ENCODE measurements at regions of chr7 and their contacts with region 1.

Region 1: DNA sequence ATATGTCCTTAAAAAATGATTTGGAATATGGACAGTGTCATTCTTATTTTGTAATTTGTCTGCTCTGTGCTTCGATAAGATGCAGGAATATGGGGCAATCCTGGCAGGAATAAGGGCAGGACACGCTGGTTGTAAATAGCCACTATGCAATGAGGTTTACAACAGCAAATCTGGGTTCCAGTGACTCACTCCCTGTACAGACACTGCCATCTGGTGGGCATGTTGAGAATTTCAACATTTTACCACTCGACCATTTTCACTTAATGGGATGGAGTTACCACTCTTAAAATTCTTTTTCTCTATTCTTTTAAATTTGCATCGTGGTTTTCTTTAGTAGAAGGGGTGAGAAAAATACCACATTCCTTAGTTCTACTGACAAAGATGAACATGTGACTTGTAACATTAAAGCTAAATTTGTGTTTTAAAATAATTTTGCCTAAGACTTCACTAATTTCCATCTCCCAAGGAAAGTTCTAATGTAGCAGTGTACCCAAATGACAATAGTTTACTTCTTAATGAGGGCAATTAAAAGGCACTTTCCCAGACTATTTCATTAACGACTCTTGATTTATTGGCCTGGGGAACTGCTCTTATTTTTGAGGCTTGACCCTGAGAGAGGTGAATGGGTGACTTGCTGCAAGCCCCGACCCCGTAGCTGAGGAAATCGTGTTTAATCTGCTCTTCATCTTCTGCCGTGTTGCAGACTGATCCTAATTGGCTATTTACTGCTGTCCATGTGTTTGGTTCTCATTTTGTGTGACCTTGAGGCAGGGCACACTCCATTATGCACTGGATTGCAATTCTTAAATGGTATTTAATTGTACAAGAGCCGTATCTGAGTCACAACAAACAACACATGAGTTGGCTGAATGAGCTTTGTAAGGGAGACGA is 173.6 kb upstream of the IMMP2L start:
- DNase-seq: peak; percentile 62
- H3K4me3 ChIP-seq: no peak overlapping the region
- H3K27ac ChIP-seq: no peak overlapping the region
- H3K4me1 ChIP-seq: no peaks in the 10 kb centered on the region
- CTCF ChIP-seq: peak; percentile 92

Region 2: GRCh38 chr7:109844362-109844761 is 1891.5 kb before region 1 on chr7:
- CTCF ChIA-PET with region 1: no interaction called
- POLR2A ChIA-PET with region 1: no interaction called
- intact Hi-C with region 1: loop called (anchors 5 kb)
- DNase-seq: no peak
- H3K4me3 ChIP-seq: no peak overlapping the region
- H3K27ac ChIP-seq: no peak overlapping the region
- H3K4me1 ChIP-seq: no peaks in the 10 kb centered on the region
- CTCF ChIP-seq: peak; percentile 69

Region 3: DNA sequence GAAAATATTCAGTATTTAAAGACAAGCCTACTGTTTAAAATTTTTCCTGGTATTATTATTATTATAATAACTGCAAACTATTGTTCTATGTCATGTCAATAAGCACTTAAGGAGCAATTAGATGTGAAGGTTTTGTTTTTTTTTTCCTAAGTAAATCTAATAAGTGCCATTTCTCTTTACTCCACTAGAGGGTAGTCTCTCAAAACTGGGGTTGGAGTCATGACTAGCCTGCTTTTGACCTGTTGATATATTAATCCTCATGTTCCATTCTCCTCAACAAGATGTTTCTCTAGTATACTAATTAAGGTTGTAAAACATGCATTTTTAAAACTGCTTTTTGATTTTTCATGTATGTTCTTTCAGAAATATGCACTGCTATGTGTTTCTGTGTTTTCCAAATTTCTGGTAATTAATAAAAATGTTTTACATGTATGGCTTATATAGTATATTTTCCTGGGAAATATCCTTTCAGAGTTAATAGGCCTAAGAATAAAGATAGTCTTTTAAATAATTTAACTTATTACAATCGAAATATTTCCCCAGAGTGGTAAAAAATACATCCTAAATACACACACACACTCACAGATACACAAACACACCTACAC is 646.0 kb before region 1 on chr7:
- CTCF ChIA-PET with region 1: no interaction called
- POLR2A ChIA-PET with region 1: no interaction called
- intact Hi-C with region 1: loop called (anchors 2 kb)
- DNase-seq: peak; percentile 44
- H3K4me3 ChIP-seq: no peak overlapping the region
- H3K27ac ChIP-seq: no peak overlapping the region
- H3K4me1 ChIP-seq: no peaks in the 10 kb centered on the region
- CTCF ChIP-seq: peak; percentile 87

Region 4: GRCh38 chr7:111312964-111313363 is 422.9 kb before region 1 on chr7:
- CTCF ChIA-PET with region 1: no interaction called
- POLR2A ChIA-PET with region 1: no interaction called
- intact Hi-C with region 1: loop called (anchors 10 kb)
- DNase-seq: peak; percentile 1
- H3K4me3 ChIP-seq: no peak overlapping the region
- H3K27ac ChIP-seq: no peak overlapping the region
- H3K4me1 ChIP-seq: no peaks in the 10 kb centered on the region
- CTCF ChIP-seq: 0 out of 2 replicates have a peak, but pooled peaks have one; percentile 28

Region 5: DNA sequence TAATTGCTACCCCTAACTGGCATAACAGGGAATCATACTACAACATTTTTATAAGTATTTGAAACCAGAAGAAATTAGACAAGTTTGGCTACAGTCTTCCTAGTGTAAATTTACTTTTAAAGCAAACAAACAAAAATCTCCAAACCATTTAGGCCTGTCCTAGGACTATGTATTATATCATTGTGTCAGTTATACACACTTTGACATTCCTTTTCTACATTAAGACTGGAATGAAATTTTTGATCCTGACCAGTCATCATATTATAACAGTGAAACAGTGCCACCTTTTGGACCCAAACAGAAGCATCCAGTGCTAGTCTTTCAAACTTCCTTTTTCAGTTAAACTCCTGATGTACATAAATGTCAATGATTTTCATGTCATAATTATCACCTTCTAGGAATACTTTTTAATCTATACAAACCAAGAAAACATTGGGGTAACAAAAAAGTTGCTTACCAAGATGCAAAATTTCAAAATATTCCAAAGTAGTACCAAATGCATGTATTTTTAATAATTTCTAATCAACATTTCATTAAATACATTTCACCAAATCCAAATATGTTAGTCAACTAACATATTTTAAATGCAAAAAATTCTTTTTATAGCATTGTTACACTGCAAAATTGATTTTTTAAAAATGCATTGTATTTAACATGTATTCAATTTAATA is 249.3 kb before region 1 on chr7:
- CTCF ChIA-PET with region 1: no interaction called
- POLR2A ChIA-PET with region 1: no interaction called
- intact Hi-C with region 1: loop called (anchors 5 kb)
- DNase-seq: peak; percentile 49
- H3K4me3 ChIP-seq: no peak overlapping the region
- H3K27ac ChIP-seq: no peak overlapping the region
- H3K4me1 ChIP-seq: no peaks in the 10 kb centered on the region
- CTCF ChIP-seq: peak; percentile 91

Region 6: GRCh38 chr7:111697776-111698175 is 38.1 kb before region 1 on chr7:
- CTCF ChIA-PET with region 1: no interaction called
- POLR2A ChIA-PET with region 1: no interaction called
- intact Hi-C with region 1: no loop called
- DNase-seq: no peak
- H3K4me3 ChIP-seq: no peak overlapping the region
- H3K27ac ChIP-seq: no peak overlapping the region
- H3K4me1 ChIP-seq: no peaks in the 10 kb centered on the region
- CTCF ChIP-seq: no peak

Region 7: GRCh38 chr7:111771638-111772037 is 35.7 kb after region 1 on chr7:
- CTCF ChIA-PET with region 1: no interaction called
- POLR2A ChIA-PET with region 1: no interaction called
- intact Hi-C with region 1: no loop called
- DNase-seq: no peak
- H3K4me3 ChIP-seq: no peak overlapping the region
- H3K27ac ChIP-seq: no peak overlapping the region
- H3K4me1 ChIP-seq: no peaks in the 10 kb centered on the region
- CTCF ChIP-seq: no peak

Measured in OCI-LY7 (cell line).